CD4-positive, alpha-beta T cell (primary cell): ENCODE measurements at regions of chr1 and their contacts with region 1.

Region 1: DNA sequence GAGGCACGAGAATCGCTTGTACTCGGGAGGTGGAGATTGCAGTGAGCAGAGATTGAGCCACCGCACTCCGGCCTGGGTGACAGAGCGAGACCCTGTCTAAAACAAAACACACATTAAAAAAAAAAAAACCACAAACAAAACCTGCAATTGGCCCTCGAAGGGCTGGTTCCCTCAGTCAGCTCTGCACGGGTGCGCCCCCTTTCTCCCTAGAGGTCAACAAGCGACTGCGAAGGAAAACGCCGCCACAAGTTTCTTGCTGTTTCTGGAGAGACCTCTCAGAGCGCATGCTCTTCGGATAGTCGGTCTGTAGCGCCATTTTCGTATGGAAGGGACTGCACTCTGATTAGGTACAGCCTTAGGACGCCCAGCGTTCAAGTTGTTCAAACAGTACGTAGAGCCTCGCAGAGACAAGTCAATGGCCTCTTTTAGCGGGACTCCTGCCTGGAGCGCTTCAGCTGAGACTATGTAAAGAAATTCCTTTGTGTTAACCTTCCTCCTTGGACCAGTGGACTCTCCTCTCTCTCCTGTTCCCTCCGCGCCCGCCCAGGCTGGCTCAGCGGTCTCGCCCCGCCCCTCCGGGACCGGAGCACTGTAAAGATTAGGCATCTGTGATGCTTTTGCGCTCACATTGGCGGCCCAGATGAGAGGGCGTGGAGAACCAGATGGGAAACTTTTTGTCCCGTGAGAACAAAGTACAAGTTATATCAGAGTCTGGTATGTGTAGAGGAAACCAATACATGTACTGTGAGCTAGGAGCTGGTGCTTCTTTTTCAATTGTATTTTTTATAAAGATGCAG is 1.0 kb upstream of the CDC14A start:
- DNase-seq: peak; percentile 72 to 95 (median 82)
- ATAC-seq: peak; percentile 74
- H3K4me3 ChIP-seq: peak overlapping the region; percentile 96
- H3K4me3 Mint-ChIP-seq: peak overlapping the region; percentile 93
- H3K27ac ChIP-seq: peak overlapping the region; percentile 86 to 92
- H3K27ac Mint-ChIP-seq: peak overlapping the region; percentile 96
- H3K4me1 ChIP-seq: peaks cover 21% of the 10 kb centered on the region
- H3K4me1 Mint-ChIP-seq: peaks cover 36% of the 10 kb centered on the region
- H3K27me3 ChIP-seq: no peaks in the 10 kb centered on the region
- H3K27me3 Mint-ChIP-seq: no peaks in the 10 kb centered on the region
- CTCF ChIP-seq: peak; percentile 26

Region 2: GRCh38 chr1:100249537-100250257 is 101.6 kb before region 1 on chr1 and contains the start of gene DBT:
- CTCF ChIA-PET with region 1: no interaction called
- POLR2A ChIA-PET with region 1: interaction called, 34 read pairs
- intact Hi-C with region 1: loop called in 1 of 2 experiments (anchors 5 kb)
- DNase-seq: peak; percentile 82 to 95 (median 86)
- ATAC-seq: peak; percentile 99
- H3K4me3 ChIP-seq: peak within 1 kb of the TSS; percentile 88
- H3K4me3 Mint-ChIP-seq: no peak within 1 kb of the TSS
- H3K27ac ChIP-seq: peak within 1 kb of the TSS; percentile 51 to 69
- H3K27ac Mint-ChIP-seq: no peak within 1 kb of the TSS
- H3K4me1 ChIP-seq: peaks cover 11% of the 10 kb centered on the region
- H3K4me1 Mint-ChIP-seq: peaks cover 15% of the 10 kb centered on the region
- H3K27me3 ChIP-seq: no peaks in the 10 kb centered on the region
- H3K27me3 Mint-ChIP-seq: no peaks in the 10 kb centered on the region
- CTCF ChIP-seq: no peak
- total RNA-seq, gene DBT: 5.3 to 5.4 TPM

Region 3: GRCh38 chr1:100292711-100293110 is 58.6 kb before region 1 on chr1:
- CTCF ChIA-PET with region 1: no interaction called
- POLR2A ChIA-PET with region 1: no interaction called
- intact Hi-C with region 1: loop called (anchors 5 to 10 kb)
- DNase-seq: no peak
- ATAC-seq: no peak
- H3K4me3 ChIP-seq: no peak overlapping the region
- H3K4me3 Mint-ChIP-seq: no peak overlapping the region
- H3K27ac ChIP-seq: no peak overlapping the region
- H3K27ac Mint-ChIP-seq: peak overlapping the region; percentile 18
- H3K4me1 ChIP-seq: no peaks in the 10 kb centered on the region
- H3K4me1 Mint-ChIP-seq: no peaks in the 10 kb centered on the region
- H3K27me3 ChIP-seq: no peaks in the 10 kb centered on the region
- H3K27me3 Mint-ChIP-seq: no peaks in the 10 kb centered on the region
- CTCF ChIP-seq: no peak

Region 4: GRCh38 chr1:100400404-100400803 is 49.1 kb after region 1 on chr1:
- CTCF ChIA-PET with region 1: interaction called, 4 read pairs
- POLR2A ChIA-PET with region 1: interaction called, 30 read pairs
- intact Hi-C with region 1: no loop called
- DNase-seq: peak; percentile 54 to 91 (median 68)
- ATAC-seq: peak; percentile 91
- H3K4me3 ChIP-seq: peak overlapping the region; percentile 15
- H3K4me3 Mint-ChIP-seq: peak overlapping the region; percentile 81
- H3K27ac ChIP-seq: peak overlapping the region; percentile 51
- H3K27ac Mint-ChIP-seq: peak overlapping the region; percentile 85
- H3K4me1 ChIP-seq: peaks cover 62% of the 10 kb centered on the region
- H3K4me1 Mint-ChIP-seq: peaks cover 94% of the 10 kb centered on the region
- H3K27me3 ChIP-seq: no peaks in the 10 kb centered on the region
- H3K27me3 Mint-ChIP-seq: no peaks in the 10 kb centered on the region
- CTCF ChIP-seq: no peak

Region 5: DNA sequence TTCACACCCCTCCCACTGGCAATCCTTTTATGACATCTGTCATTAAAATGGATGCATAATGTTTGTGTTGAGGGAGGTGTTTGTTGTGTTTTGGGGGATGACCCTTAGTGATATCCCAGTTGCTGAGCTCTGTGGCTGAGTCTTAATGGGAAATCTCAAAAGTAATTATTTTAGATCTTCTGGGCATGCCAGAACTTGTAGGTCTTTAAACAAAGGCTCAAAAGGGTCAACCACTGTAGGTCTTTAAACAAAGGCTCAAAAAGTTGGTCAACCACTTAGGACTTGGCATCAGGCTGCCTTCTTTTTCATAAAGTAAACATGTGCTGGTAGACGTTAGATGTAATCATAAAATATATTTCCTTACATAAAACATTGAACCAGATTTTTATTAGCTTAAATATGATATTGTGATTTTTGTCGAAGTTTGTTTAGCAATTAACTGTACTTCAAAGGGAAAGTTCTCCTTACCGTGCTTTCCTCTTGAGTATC is 79.1 kb after region 1 on chr1:
- CTCF ChIA-PET with region 1: interaction called, 3 read pairs
- POLR2A ChIA-PET with region 1: interaction called, 7 read pairs
- intact Hi-C with region 1: loop called in 1 of 2 experiments (anchors 5 kb)
- DNase-seq: no peak
- ATAC-seq: no peak
- H3K4me3 ChIP-seq: no peak overlapping the region
- H3K4me3 Mint-ChIP-seq: no peak overlapping the region
- H3K27ac ChIP-seq: no peak overlapping the region
- H3K27ac Mint-ChIP-seq: peak overlapping the region; percentile 68
- H3K4me1 ChIP-seq: peaks cover 41% of the 10 kb centered on the region
- H3K4me1 Mint-ChIP-seq: peaks cover 78% of the 10 kb centered on the region
- H3K27me3 ChIP-seq: no peaks in the 10 kb centered on the region
- H3K27me3 Mint-ChIP-seq: no peaks in the 10 kb centered on the region
- CTCF ChIP-seq: no peak

Region 6: DNA sequence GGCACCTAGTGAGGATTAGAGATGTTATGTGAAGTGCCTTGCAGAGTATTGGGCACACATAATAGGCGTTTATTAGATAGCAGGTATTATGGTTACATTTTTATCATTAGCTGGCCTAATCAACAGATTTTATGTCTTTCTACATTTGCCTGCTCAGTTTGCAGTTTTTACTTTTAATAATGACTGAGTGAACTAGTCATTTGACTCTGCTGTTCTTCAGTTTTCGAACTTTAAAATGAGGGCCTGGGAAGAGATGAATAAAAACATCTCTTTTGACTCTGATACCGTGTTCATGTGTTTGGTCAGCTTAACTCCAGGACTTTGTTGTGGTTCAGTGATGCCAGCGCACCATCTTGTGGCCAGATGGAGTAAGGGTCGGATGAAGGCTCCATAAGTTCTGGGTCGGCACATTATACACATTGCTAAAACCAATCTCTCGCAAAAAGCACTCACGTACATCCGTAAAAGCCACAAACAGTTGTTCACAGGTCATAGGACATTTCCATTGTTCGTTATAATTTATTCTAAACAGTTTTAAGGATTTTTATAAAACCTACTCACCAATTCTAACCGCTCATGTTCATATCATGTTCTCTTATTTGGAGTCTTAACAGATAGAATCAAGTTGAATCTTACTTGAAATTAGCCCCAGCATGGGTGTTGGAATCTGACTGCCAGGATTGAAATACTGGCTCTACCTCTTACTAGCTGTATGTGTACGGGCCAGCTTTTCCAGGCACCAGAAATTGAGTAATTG is 108.2 kb after region 1 on chr1:
- CTCF ChIA-PET with region 1: interaction called, 40 read pairs
- POLR2A ChIA-PET with region 1: interaction called, 44 read pairs
- intact Hi-C with region 1: loop called (anchors 2 to 5 kb)
- DNase-seq: peak; percentile 41 to 86 (median 62)
- ATAC-seq: peak; percentile 61
- H3K4me3 ChIP-seq: no peak overlapping the region
- H3K4me3 Mint-ChIP-seq: peak overlapping the region; percentile 62
- H3K27ac ChIP-seq: no peak overlapping the region
- H3K27ac Mint-ChIP-seq: peak overlapping the region; percentile 33
- H3K4me1 ChIP-seq: peaks cover 23% of the 10 kb centered on the region
- H3K4me1 Mint-ChIP-seq: peaks cover 83% of the 10 kb centered on the region
- H3K27me3 ChIP-seq: no peaks in the 10 kb centered on the region
- H3K27me3 Mint-ChIP-seq: no peaks in the 10 kb centered on the region
- CTCF ChIP-seq: peak; percentile 89

Region 7: GRCh38 chr1:100606438-100606837 is 255.1 kb after region 1 on chr1:
- CTCF ChIA-PET with region 1: no interaction called
- POLR2A ChIA-PET with region 1: no interaction called
- intact Hi-C with region 1: no loop called
- DNase-seq: peak in 2 of 14 experiments; percentile 9 to 21
- ATAC-seq: no peak
- H3K4me3 ChIP-seq: no peak overlapping the region
- H3K4me3 Mint-ChIP-seq: no peak overlapping the region
- H3K27ac ChIP-seq: no peak overlapping the region
- H3K27ac Mint-ChIP-seq: no peak overlapping the region
- H3K4me1 ChIP-seq: no peaks in the 10 kb centered on the region
- H3K4me1 Mint-ChIP-seq: no peaks in the 10 kb centered on the region
- H3K27me3 ChIP-seq: no peaks in the 10 kb centered on the region
- H3K27me3 Mint-ChIP-seq: peaks cover 9% of the 10 kb centered on the region
- CTCF ChIP-seq: no peak